CD4-positive, alpha-beta T cell (primary cell): ENCODE measurements at regions of chr1 and their contacts with region 1.

Region 1: DNA sequence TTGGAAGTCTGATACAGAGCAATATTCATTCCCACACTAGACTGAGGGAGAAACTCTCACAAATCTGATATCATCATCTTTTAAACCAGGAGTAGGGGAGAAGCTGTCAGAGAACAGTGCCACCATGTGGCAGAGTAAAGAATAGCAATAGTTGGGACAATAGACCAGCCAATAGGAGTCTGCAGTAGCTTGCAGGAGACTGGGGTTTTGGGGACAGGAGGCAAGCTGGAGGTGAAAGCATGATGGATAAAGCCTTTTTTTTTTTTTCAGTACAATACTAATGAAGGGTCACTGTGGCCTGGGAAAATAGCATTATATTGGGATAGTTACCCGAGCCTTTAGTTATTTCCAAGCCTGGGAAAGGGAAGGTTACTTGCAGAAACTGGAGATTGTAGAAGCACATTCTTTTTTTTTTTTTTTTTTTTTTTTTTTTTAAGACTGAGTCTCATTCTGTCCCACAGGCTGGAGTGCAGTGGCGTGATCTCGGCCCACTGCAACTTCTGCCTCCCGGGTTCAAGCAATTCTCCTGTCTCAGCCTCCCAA is 120.7 kb downstream of the S1PR1 start:
- DNase-seq: peak; percentile 43 to 92 (median 60)
- ATAC-seq: peak; percentile 100
- H3K4me3 ChIP-seq: no peak overlapping the region
- H3K4me3 Mint-ChIP-seq: no peak overlapping the region
- H3K27ac ChIP-seq: no peak overlapping the region
- H3K27ac Mint-ChIP-seq: peak overlapping the region; percentile 5
- H3K4me1 ChIP-seq: peaks cover 7% of the 10 kb centered on the region
- H3K4me1 Mint-ChIP-seq: peaks cover 9% of the 10 kb centered on the region
- H3K27me3 ChIP-seq: no peaks in the 10 kb centered on the region
- H3K27me3 Mint-ChIP-seq: no peaks in the 10 kb centered on the region
- CTCF ChIP-seq: peak; percentile 84

Region 2: DNA sequence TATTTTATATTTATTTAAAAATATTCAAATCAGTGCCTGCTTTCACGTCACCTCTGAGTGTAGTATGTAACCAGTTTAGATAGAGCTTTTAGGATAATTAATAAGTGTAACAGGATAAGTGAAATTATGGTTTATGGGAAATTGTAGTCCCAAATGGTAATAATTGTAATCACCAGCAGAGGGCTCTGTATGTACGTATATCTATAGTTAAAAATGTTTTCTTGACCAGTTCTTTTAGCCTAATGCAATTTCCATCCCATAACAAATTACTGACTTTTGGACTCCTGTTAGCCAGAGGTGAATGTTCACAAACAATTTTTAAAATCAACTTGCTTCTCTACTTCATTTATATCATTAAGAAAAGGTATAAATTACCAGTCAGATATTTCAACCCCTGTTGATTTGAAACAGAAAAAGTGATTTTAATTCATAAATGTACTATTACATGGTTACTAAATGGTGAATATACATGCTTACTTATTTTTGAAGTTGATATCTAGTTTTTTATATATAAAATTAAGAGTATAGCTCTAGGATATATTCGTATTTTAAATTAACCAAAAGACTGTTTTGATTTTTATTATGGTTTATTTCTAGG is 436.3 kb before region 1 on chr1:
- CTCF ChIA-PET with region 1: no interaction called
- POLR2A ChIA-PET with region 1: interaction called, 3 read pairs
- intact Hi-C with region 1: loop called (anchors 1 to 2 kb)
- DNase-seq: peak in 4 of 14 experiments; percentile 19 to 80 (median 74)
- ATAC-seq: no peak
- H3K4me3 ChIP-seq: no peak overlapping the region
- H3K4me3 Mint-ChIP-seq: no peak overlapping the region
- H3K27ac ChIP-seq: no peak overlapping the region
- H3K27ac Mint-ChIP-seq: peak overlapping the region; percentile 71
- H3K4me1 ChIP-seq: peaks cover 28% of the 10 kb centered on the region
- H3K4me1 Mint-ChIP-seq: peaks cover 39% of the 10 kb centered on the region
- H3K27me3 ChIP-seq: no peaks in the 10 kb centered on the region
- H3K27me3 Mint-ChIP-seq: no peaks in the 10 kb centered on the region
- CTCF ChIP-seq: peak; percentile 97

Region 3: GRCh38 chr1:101148980-101149379 is 208.5 kb before region 1 on chr1:
- CTCF ChIA-PET with region 1: no interaction called
- POLR2A ChIA-PET with region 1: no interaction called
- intact Hi-C with region 1: no loop called
- DNase-seq: no peak
- ATAC-seq: no peak
- H3K4me3 ChIP-seq: no peak overlapping the region
- H3K4me3 Mint-ChIP-seq: no peak overlapping the region
- H3K27ac ChIP-seq: no peak overlapping the region
- H3K27ac Mint-ChIP-seq: no peak overlapping the region
- H3K4me1 ChIP-seq: no peaks in the 10 kb centered on the region
- H3K4me1 Mint-ChIP-seq: peaks cover 16% of the 10 kb centered on the region
- H3K27me3 ChIP-seq: no peaks in the 10 kb centered on the region
- H3K27me3 Mint-ChIP-seq: no peaks in the 10 kb centered on the region
- CTCF ChIP-seq: no peak

Region 4: DNA sequence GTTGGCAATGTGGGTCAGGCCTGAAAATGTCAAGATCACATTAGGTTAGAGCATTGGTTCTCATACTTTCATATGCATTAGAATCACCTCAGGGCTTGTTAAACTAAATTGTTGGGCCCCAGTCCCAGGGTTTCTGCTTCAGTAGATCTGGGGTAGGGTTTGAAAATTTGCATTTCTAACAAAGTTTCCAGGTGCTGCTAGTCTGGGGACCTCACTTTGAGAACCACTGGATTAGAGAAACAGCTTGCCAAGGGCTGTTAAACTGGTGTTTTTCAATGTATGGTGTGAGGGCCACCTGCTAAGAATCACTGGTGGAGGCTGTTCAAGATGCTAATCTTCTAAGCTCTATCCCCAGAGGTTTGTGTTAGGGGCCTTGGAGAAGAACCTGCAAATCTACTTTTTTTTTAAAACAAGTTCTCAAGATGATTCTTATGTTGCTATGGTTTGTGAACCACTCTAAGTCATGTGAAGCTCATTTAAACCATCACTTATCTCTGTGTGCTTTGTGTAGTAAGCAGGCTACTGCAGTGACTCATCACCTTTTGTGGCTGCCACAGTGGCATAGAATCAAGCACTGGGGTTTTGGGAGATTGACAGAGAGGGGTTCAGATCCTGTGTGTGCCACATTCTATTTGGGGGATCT is 31.5 kb after region 1 on chr1:
- CTCF ChIA-PET with region 1: no interaction called
- POLR2A ChIA-PET with region 1: no interaction called
- intact Hi-C with region 1: no loop called
- DNase-seq: no peak
- ATAC-seq: no peak
- H3K4me3 ChIP-seq: no peak overlapping the region
- H3K4me3 Mint-ChIP-seq: no peak overlapping the region
- H3K27ac ChIP-seq: no peak overlapping the region
- H3K27ac Mint-ChIP-seq: no peak overlapping the region
- H3K4me1 ChIP-seq: no peaks in the 10 kb centered on the region
- H3K4me1 Mint-ChIP-seq: no peaks in the 10 kb centered on the region
- H3K27me3 ChIP-seq: no peaks in the 10 kb centered on the region
- H3K27me3 Mint-ChIP-seq: no peaks in the 10 kb centered on the region
- CTCF ChIP-seq: no peak